Activated naive CD4-positive, alpha-beta T cell treated with anti-CD3 and anti-CD28 coated beads for 36 hours (primary cell): ENCODE measurements at regions of chr18 and their contacts with region 1.

Region 1: GRCh38 chr18:54269893-54270844 is 852 bp downstream of the POLI start:
- DNase-seq: peak; percentile 62
- H3K4me3 Mint-ChIP-seq: peak overlapping the region; percentile 83
- H3K27ac Mint-ChIP-seq: peak overlapping the region; percentile 94
- H3K4me1 Mint-ChIP-seq: peaks cover 24% of the 10 kb centered on the region
- H3K27me3 Mint-ChIP-seq: no peaks in the 10 kb centered on the region

Region 2: DNA sequence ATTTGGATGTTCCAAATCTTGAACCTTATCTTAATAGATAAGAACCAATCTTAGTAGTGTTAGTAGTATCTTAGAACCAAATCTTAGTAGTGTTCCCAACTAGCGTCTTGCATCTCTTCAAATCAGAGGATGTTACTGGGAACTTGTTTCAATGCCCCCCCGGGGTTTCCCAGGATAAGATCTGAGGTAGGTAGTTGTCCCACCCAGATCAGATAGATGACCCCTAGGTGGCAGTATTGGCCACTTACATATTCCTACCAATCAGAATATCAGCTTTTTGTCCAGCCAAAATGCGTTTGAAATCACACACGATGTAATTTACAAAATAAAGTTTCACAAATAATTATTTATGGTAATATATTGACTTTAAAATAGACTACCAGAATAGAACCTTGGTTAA is 360.5 kb before region 1 on chr18:
- CTCF ChIA-PET with region 1: no interaction called
- intact Hi-C with region 1: loop called (anchors 10 kb)
- DNase-seq: peak; percentile 30
- H3K4me3 Mint-ChIP-seq: no peak overlapping the region
- H3K27ac Mint-ChIP-seq: no peak overlapping the region
- H3K4me1 Mint-ChIP-seq: no peaks in the 10 kb centered on the region
- H3K27me3 Mint-ChIP-seq: peaks cover under 1% of the 10 kb centered on the region

Region 3: DNA sequence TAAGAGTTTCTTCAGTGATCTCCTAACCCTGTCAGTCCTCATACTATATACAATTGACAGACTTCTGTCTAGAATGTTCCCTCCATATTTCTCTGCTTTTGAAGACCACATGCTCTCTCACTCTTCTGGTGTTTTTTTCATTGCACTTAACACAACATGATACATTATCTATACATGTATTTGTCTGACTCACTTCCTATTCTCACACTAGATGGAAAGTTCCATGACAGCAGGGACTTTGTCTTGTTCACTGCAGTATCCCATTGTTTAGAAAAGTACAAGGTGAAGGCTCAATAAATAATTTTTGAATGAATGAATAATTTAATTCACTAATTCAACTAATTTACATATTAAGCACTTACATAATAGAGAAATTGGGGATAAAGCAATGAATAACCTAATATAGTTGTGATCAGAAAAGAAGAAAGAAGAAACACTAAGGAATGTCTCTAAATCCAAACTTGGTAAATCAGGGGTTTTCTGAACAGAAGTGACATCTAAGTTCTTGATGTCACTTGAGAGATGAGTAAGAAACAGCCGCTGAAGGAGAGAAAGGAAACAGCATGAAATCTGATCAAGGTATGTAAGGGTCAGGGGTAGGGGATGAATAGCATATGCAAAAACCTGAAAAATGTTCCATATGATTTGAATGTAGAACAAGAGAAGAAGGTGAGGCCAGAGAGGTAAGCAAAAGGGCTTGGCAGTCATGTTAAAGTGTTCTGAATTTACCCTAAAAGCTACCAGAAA is 88.1 kb before region 1 on chr18:
- CTCF ChIA-PET with region 1: no interaction called
- intact Hi-C with region 1: loop called (anchors 1 kb)
- DNase-seq: peak; percentile 20
- H3K4me3 Mint-ChIP-seq: no peak overlapping the region
- H3K27ac Mint-ChIP-seq: no peak overlapping the region
- H3K4me1 Mint-ChIP-seq: peaks cover 9% of the 10 kb centered on the region
- H3K27me3 Mint-ChIP-seq: no peaks in the 10 kb centered on the region

Region 4: DNA sequence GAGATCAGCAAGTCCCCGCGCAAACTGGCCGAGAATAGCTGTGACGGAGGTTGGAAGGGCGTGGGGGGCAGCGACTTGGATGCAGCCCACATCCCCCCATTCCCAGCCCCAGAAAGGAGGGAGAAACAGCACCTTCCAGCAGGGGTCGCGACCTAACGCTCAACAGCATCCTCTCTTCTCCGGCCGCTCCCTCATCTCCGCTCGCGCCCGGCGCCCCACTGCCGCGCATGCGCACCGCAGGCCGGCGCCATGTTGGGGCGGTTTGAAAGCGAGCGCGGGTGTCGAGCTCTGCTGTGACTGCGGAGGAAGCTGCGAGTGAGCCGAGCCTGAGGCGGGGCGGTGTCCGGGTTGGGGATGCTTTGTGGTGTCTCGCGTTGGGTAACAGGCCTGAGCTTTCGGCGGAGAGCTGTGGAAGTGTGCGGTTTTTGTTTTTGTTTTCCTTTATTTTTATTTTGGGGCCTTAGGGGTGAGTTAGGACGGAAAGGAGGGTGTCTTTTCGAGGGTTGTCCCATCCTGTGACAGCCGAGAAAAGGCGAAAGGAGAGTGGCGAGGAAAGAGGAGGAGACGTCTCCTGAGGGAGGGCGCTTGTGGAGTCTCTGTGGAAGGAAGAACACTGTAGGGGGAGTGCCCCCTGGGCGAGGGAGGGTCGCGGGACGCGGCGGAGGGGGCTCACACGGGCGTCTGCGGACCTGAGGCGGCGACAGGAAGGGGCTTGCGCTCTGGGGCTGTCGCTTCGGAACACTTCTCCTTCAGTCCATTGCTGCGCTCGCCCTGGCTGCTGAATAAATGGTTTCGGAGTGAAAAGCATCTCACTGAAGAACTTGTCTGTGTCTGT is 87.7 kb after region 1 on chr18 and contains the starts of genes C18orf54 and STARD6:
- CTCF ChIA-PET with region 1: interaction called, 16 read pairs
- intact Hi-C with region 1: loop called (anchors 1 kb)
- DNase-seq: peak; percentile 89
- H3K4me3 Mint-ChIP-seq: peak within 1 kb of the TSS; percentile 100
- H3K27ac Mint-ChIP-seq: peak within 1 kb of the TSS; percentile 95
- H3K4me1 Mint-ChIP-seq: peaks cover 12% of the 10 kb centered on the region
- H3K27me3 Mint-ChIP-seq: peaks cover 5% of the 10 kb centered on the region
- total RNA-seq, gene C18orf54: 10.2 to 11.5 TPM
- total RNA-seq, gene STARD6: not detected

Region 5: DNA sequence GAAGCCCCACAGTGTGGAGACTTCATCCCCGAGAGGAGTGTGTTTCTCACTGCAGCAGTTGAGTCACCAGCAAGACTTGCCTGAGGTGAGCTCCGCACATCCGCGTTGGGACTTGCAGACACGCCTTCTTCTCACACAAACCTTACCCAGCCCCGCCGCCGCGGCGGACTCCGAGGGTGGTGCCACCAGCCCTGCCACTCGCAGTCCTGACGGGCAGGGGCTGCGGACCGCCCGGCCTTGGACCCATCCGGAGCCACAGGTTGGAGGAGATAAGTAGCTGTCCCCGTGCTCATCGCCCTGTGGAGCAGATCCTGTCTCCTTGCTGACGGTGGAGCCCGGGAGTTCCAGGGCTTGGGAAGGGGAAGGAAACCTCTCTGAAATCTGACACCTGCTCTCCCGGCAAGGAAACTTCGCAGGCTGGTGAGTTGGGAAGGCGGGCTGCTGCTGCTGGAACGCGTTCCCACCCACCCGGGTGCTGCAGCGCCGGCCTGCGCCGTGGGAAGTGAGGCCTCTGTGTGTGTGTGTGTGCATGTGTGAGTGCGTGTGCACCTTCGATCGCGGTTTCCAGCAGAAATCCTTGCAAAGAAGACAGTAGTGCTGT is 558.2 kb after region 1 on chr18 and contains the start of gene RAB27B:
- CTCF ChIA-PET with region 1: no interaction called
- intact Hi-C with region 1: loop called (anchors 2 kb)
- DNase-seq: peak; percentile 85
- H3K4me3 Mint-ChIP-seq: peak within 1 kb of the TSS; percentile 75
- H3K27ac Mint-ChIP-seq: peak within 1 kb of the TSS; percentile 4
- H3K4me1 Mint-ChIP-seq: peaks cover 18% of the 10 kb centered on the region
- H3K27me3 Mint-ChIP-seq: no peaks in the 10 kb centered on the region
- total RNA-seq, gene RAB27B: 0.52 TPM in 1 of 2 experiments, not detected in the other